ENCODE measurements at regions of chrX and their contacts with region 1.

Region 1: GRCh38 chrX:72181178-72182125 is at the start of gene PIN4:
- DNase-seq: peak; percentile 66 to 93 (median 76)
- ATAC-seq: peak; percentile 84
- H3K4me3 ChIP-seq: peak within 1 kb of the TSS; percentile 76
- H3K4me3 Mint-ChIP-seq: no peak within 1 kb of the TSS
- H3K27ac ChIP-seq: peak within 1 kb of the TSS; percentile 41 to 52
- H3K27ac Mint-ChIP-seq: no peak within 1 kb of the TSS
- H3K4me1 ChIP-seq: peaks cover 17% of the 10 kb centered on the region
- H3K4me1 Mint-ChIP-seq: peaks cover 19% of the 10 kb centered on the region
- H3K27me3 ChIP-seq: no peaks in the 10 kb centered on the region
- H3K27me3 Mint-ChIP-seq: no peaks in the 10 kb centered on the region
- CTCF ChIP-seq: no peak
- total RNA-seq, gene PIN4: 0.92 to 1.2 TPM

Region 2: DNA sequence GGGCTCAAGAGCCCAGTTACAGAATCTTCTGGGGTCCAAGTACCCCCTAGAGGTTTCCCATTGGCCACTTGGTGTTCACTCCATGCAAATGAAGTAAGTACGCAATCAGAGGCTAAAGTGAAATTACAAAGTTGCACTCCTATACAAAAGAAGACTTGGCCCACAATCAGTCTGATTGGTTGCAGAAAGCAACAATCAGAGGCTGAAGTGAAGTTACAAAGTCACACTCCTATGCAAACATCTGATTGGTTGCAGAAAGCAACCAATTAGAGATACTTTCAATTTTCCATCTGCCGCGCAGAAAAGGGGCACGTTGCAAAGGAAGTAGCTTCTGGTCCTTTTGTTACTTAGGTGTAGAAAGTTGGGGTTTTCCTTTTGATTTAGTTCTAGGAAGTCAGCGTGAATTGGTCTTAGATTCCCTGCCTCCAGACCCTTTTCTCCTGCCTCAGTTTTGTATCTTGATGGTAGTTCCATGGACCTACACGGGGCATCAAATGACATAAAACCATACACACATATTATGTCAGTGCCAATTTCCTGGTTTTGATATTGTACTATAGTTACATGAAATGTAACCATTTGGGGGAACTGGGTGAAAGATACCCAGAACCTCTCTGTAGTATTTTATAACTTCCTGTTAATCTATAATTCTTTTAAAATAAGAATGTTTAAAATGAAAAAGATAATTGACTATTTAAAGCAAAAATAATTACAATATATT is 12.3 kb before region 1 on chrX:
- CTCF ChIA-PET with region 1: no interaction called
- POLR2A ChIA-PET with region 1: interaction called, 12 read pairs
- intact Hi-C with region 1: no loop called
- DNase-seq: peak; percentile 2 to 86 (median 12)
- ATAC-seq: peak; percentile 91
- H3K4me3 ChIP-seq: peak overlapping the region; percentile 52
- H3K4me3 Mint-ChIP-seq: peak overlapping the region; percentile 78
- H3K27ac ChIP-seq: peak overlapping the region; percentile 15 to 75
- H3K27ac Mint-ChIP-seq: peak overlapping the region; percentile 87
- H3K4me1 ChIP-seq: peaks cover 2% of the 10 kb centered on the region
- H3K4me1 Mint-ChIP-seq: peaks cover 11% of the 10 kb centered on the region
- H3K27me3 ChIP-seq: no peaks in the 10 kb centered on the region
- H3K27me3 Mint-ChIP-seq: no peaks in the 10 kb centered on the region
- CTCF ChIP-seq: no peak

Region 3: DNA sequence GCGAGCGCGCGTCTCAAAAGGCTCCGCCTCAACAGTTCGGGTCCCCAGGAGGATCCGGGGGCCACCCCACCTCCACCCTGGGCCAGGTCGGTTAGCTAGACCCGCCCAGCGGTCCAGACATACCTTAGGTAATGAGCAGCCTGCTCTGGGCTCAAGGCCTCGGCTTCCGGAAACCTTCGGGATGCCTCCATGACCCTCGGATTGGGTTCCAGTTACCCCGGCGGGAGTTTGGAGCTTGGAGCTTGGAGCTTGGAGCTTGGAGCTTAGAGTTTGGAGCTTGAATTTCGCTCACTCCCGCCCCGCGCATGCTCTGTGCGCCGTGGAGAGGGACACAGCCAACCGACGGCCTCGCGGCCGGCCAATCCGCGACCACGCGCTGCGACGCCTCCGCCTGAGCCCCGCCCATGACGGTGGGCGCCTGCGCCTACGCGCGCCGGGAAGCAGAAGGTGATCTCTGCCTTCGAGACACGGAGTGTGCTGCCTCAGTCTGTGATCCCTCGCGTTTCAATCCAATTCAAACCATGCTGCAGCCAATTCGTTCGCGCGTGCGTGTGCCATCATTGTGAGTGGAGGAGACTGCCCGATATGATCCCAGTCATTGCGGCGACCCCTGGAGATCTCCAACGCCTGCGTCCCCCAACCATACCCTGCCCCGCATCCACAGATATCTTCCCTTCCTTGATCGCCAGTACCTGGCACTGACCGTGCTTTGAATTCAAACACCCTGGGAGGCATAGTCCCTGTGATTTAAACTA is 57.4 kb after region 1 on chrX and contains the start of gene ERCC6L:
- CTCF ChIA-PET with region 1: no interaction called
- POLR2A ChIA-PET with region 1: interaction called, 7 read pairs
- intact Hi-C with region 1: loop called (anchors 2 kb)
- DNase-seq: peak; percentile 68 to 92 (median 78)
- ATAC-seq: peak; percentile 99
- H3K4me3 ChIP-seq: peak within 1 kb of the TSS; percentile 61
- H3K4me3 Mint-ChIP-seq: peak within 1 kb of the TSS; percentile 76
- H3K27ac ChIP-seq: no peak within 1 kb of the TSS
- H3K27ac Mint-ChIP-seq: peak within 1 kb of the TSS; percentile 49
- H3K4me1 ChIP-seq: peaks cover 8% of the 10 kb centered on the region
- H3K4me1 Mint-ChIP-seq: no peaks in the 10 kb centered on the region
- H3K27me3 ChIP-seq: no peaks in the 10 kb centered on the region
- H3K27me3 Mint-ChIP-seq: no peaks in the 10 kb centered on the region
- CTCF ChIP-seq: no peak
- total RNA-seq, gene ERCC6L: 0.08 TPM in 1 of 2 experiments, not detected in the other

Region 4: DNA sequence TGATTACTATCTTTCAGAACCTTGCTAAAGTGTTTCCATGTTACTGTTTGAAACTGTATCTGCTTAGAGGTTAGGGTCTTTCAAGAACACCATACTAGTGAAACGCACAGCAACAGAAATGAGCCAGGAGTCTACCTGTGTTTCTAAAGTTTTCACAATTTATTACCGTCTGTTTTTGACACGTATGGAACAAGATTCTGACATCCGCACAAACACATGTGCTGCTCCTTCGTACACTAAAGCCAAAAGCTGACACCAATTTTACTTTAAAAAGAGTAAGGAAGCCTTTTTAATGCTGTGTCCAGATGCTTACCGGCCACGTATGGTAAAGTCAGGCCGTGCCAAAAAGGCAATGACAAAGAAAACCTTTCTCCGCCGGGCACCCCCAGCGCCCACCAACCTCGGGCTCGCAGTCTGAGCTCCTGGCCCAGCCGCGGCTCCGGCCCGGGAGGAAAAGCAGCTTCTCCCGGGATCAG is 95.1 kb after region 1 on chrX:
- CTCF ChIA-PET with region 1: interaction called, 4 read pairs
- POLR2A ChIA-PET with region 1: interaction called, 33 read pairs
- intact Hi-C with region 1: loop called (anchors 2 to 5 kb)
- DNase-seq: no peak
- ATAC-seq: no peak
- H3K4me3 ChIP-seq: peak overlapping the region; percentile 95
- H3K4me3 Mint-ChIP-seq: peak overlapping the region; percentile 96
- H3K27ac ChIP-seq: peak overlapping the region; percentile 64 to 80
- H3K27ac Mint-ChIP-seq: peak overlapping the region; percentile 93
- H3K4me1 ChIP-seq: peaks cover 26% of the 10 kb centered on the region
- H3K4me1 Mint-ChIP-seq: peaks cover 42% of the 10 kb centered on the region
- H3K27me3 ChIP-seq: no peaks in the 10 kb centered on the region
- H3K27me3 Mint-ChIP-seq: peaks cover 5% of the 10 kb centered on the region
- CTCF ChIP-seq: no peak

Region 5: DNA sequence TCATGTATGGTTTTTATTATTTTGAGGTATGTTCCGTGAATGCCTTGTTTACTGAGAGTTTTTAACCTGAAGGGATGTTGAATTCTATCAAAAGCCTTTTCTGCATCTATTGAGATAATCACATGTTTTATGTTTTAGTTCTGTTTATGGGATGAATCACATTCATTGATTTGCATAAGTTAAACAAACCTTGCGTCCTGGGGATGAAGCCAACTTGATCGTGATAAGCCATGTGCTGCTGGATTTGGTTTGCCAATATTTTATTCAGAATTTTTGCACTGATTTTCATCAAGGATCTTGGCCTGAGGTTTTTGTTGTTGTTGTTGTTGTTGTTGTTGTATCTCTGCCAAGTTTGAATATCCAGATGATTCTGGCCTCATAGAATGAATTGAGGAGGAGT is 1309.2 kb after region 1 on chrX:
- CTCF ChIA-PET with region 1: no interaction called
- POLR2A ChIA-PET with region 1: no interaction called
- intact Hi-C with region 1: no loop called
- DNase-seq: no peak
- ATAC-seq: no peak
- H3K4me3 ChIP-seq: no peak overlapping the region
- H3K4me3 Mint-ChIP-seq: no peak overlapping the region
- H3K27ac ChIP-seq: no peak overlapping the region
- H3K27ac Mint-ChIP-seq: no peak overlapping the region
- H3K4me1 ChIP-seq: no peaks in the 10 kb centered on the region
- H3K4me1 Mint-ChIP-seq: no peaks in the 10 kb centered on the region
- H3K27me3 ChIP-seq: no peaks in the 10 kb centered on the region
- H3K27me3 Mint-ChIP-seq: no peaks in the 10 kb centered on the region
- CTCF ChIP-seq: no peak

Region 6: GRCh38 chrX:73943693-73944562 is 1762.5 kb after region 1 on chrX:
- CTCF ChIA-PET with region 1: no interaction called
- POLR2A ChIA-PET with region 1: no interaction called
- intact Hi-C with region 1: loop called in 1 of 2 experiments (anchors 10 kb)
- DNase-seq: peak; percentile 70 to 91 (median 84)
- ATAC-seq: peak; percentile 99
- H3K4me3 ChIP-seq: peak overlapping the region; percentile 81
- H3K4me3 Mint-ChIP-seq: peak overlapping the region; percentile 88
- H3K27ac ChIP-seq: peak overlapping the region; percentile 64 to 78
- H3K27ac Mint-ChIP-seq: peak overlapping the region; percentile 96
- H3K4me1 ChIP-seq: peaks cover 10% of the 10 kb centered on the region
- H3K4me1 Mint-ChIP-seq: peaks cover 29% of the 10 kb centered on the region
- H3K27me3 ChIP-seq: no peaks in the 10 kb centered on the region
- H3K27me3 Mint-ChIP-seq: no peaks in the 10 kb centered on the region
- CTCF ChIP-seq: no peak

Measured in CD4-positive, alpha-beta T cell (primary cell).